Activated CD4-positive, alpha-beta T cell treated with anti-CD3 and anti-CD28 coated beads for 36 hours (primary cell): ENCODE measurements at regions of chr15 and their contacts with region 1.

Region 1: GRCh38 chr15:73550190-73550589 is 83.0 kb downstream of the NPTN start:
- DNase-seq: no peak
- ATAC-seq: no peak
- H3K4me3 Mint-ChIP-seq: no peak overlapping the region
- H3K27ac Mint-ChIP-seq: no peak overlapping the region
- H3K4me1 Mint-ChIP-seq: no peaks in the 10 kb centered on the region
- H3K27me3 Mint-ChIP-seq: no peaks in the 10 kb centered on the region

Region 2: DNA sequence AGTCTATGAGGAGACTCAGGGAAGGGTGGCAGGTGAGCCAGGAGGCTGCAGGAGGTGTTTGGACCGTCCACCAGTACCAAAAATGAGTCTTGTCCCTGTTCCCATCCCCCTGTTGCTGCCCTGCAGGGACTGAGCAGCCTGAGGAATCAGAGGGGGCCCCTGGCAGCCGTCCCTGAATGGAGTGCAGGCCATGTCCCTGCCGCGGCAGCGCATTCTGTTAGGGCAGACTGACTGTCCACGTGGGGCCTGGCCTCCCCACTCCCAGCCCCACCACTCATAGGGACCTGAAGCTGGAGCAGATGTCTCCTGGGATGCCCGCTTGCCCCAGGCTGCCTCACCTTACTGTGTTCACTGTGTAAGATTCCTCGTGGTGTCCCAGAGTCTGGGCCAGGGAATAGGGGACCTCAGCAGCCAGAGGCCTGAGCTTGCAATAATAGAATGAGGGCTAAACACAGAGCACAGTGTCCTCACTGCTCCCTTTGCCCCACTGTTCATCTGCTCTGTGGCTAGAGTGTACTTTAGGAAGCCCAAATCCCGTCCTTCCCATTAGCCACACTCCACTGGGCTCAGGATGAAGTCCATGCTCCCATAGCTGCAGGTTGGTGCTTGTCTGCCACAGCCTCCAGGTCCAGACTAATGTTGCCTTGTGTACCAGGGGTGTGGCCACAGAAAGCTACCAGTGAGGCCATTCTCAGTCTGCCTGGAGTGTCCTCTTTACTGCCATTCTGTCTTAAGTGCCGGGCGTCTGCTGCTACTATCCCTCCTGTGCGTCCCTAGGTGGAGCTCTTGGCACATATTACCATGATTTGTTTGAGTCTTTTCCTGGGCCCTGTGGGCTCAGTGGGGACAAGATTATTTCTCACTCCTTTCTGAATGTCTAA is 244.6 kb before region 1 on chr15:
- CTCF ChIA-PET with region 1: no interaction called
- POLR2A ChIA-PET with region 1: no interaction called
- intact Hi-C with region 1: loop called in 1 of 2 experiments (anchors 10 kb)
- DNase-seq: peak; percentile 54
- ATAC-seq: peak; percentile 60
- H3K4me3 Mint-ChIP-seq: no peak overlapping the region
- H3K27ac Mint-ChIP-seq: no peak overlapping the region
- H3K4me1 Mint-ChIP-seq: no peaks in the 10 kb centered on the region
- H3K27me3 Mint-ChIP-seq: no peaks in the 10 kb centered on the region